Endothelial cell of umbilical vein (primary cell): ENCODE measurements at regions of chrX and their contacts with region 1.

Region 1: GRCh38 chrX:100819837-100820666 is at the start of gene CSTF2:
- DNase-seq: peak; percentile 85
- H3K4me3 ChIP-seq: peak within 1 kb of the TSS; percentile 57 to 81 (median 67)
- H3K27ac ChIP-seq: peak within 1 kb of the TSS; percentile 68
- H3K4me1 ChIP-seq: peaks cover 8% of the 10 kb centered on the region
- H3K27me3 ChIP-seq: peaks cover 0 to 5% of the 10 kb centered on the region in 2 experiments
- CTCF ChIP-seq: peak in 1 of 2 donors; percentile 15
- POLR2A ChIP-seq: peak; percentile 73
- total RNA-seq, gene CSTF2: 24.8 and 25.2 TPM in 2 replicates

Region 2: GRCh38 chrX:100895365-100896075 is 75.5 kb after region 1 on chrX:
- CTCF ChIA-PET with region 1: no interaction called
- POLR2A ChIA-PET with region 1: no interaction called
- dilution Hi-C with region 1: no loop called
- intact Hi-C with region 1: no loop called
- DNase-seq: peak; percentile 26
- H3K4me3 ChIP-seq: no peak overlapping the region
- H3K27ac ChIP-seq: no peak overlapping the region
- H3K4me1 ChIP-seq: no peaks in the 10 kb centered on the region
- H3K27me3 ChIP-seq: no peaks in the 10 kb centered on the region
- CTCF ChIP-seq: peak; percentile 42 to 50
- POLR2A ChIP-seq: no peak

Region 3: DNA sequence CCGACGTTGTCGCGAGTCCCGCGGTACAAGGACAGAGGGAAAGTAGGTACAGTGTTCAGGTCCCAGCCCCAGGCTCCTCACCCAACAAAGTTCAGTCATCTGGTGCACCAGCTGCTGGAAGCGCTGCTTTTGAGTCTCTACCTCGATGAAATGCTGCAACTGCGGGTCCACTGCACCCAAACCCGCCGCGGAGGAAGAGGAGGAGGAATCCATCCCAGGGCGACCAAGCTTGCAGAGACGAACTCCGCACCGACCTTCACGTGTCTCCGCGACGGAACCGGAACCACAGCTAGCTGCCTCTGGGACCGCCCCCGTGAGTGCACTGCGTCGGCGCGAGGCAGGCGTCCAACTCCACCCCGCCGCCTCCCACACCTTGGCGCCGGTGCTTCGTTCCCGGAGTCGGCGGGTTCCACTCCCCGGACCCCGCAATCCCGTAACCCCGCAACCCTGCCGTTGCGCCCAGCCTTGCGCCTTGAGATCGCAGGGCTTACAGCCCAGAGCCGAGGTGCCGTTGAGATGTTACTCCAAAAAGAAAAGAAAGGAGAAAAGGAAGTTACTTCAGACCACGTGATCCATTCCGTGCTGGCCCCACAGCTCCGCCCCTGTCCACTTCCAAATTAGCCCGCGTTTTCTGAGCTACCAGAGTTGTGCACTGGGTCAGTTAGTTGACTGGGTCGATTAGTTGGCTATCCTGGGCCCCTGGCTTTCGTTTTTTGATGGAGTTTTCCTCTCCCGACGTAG is 528.6 kb after region 1 on chrX and contains the start of gene TIMM8A:
- CTCF ChIA-PET with region 1: no interaction called
- POLR2A ChIA-PET with region 1: no interaction called
- dilution Hi-C with region 1: no loop called
- intact Hi-C with region 1: loop called (anchors 5 kb)
- DNase-seq: peak; percentile 74
- H3K4me3 ChIP-seq: peak within 1 kb of the TSS; percentile 78 to 87 (median 85)
- H3K27ac ChIP-seq: peak within 1 kb of the TSS; percentile 84
- H3K4me1 ChIP-seq: no peaks in the 10 kb centered on the region
- H3K27me3 ChIP-seq: no peaks in the 10 kb centered on the region
- CTCF ChIP-seq: no peak
- POLR2A ChIP-seq: peak; percentile 49
- total RNA-seq, gene TIMM8A: 15.2 and 17.5 TPM in 2 replicates

Region 4: GRCh38 chrX:101430457-101431078 is 610.5 kb after region 1 on chrX:
- CTCF ChIA-PET with region 1: no interaction called
- POLR2A ChIA-PET with region 1: no interaction called
- dilution Hi-C with region 1: no loop called
- intact Hi-C with region 1: no loop called
- DNase-seq: no peak
- H3K4me3 ChIP-seq: no peak overlapping the region
- H3K27ac ChIP-seq: no peak overlapping the region
- H3K4me1 ChIP-seq: no peaks in the 10 kb centered on the region
- H3K27me3 ChIP-seq: no peaks in the 10 kb centered on the region
- CTCF ChIP-seq: no peak
- POLR2A ChIP-seq: no peak